ENCODE measurements at regions of chr1 and their contacts with region 1.

Region 1: GRCh38 chr1:109984456-109985275 is at the start of gene AHCYL1:
- DNase-seq: peak; percentile 99 to 100 (median 100)
- H3K4me3 ChIP-seq: peak within 1 kb of the TSS; percentile 71
- H3K27ac ChIP-seq: peak within 1 kb of the TSS; percentile 92 to 95
- H3K4me1 ChIP-seq: peaks cover 11% of the 10 kb centered on the region
- H3K27me3 ChIP-seq: no peaks in the 10 kb centered on the region
- CTCF ChIP-seq: peak; percentile 96 to 99 (median 99)
- EP300 ChIP-seq: peak; percentile 85
- POLR2A ChIP-seq: peak; percentile 99
- total RNA-seq, gene AHCYL1: 41.1 to 113 (median 85.8) TPM

Region 2: GRCh38 chr1:109539676-109540075 is 445.0 kb before region 1 on chr1 and contains the start of gene GPR61:
- intact Hi-C with region 1: loop called in 2 of 4 experiments (anchors 5 to 10 kb)
- DNase-seq: no peak
- H3K4me3 ChIP-seq: no peak within 1 kb of the TSS
- H3K27ac ChIP-seq: no peak within 1 kb of the TSS
- H3K4me1 ChIP-seq: peaks cover 4% of the 10 kb centered on the region
- H3K27me3 ChIP-seq: no peaks in the 10 kb centered on the region
- CTCF ChIP-seq: no peak
- EP300 ChIP-seq: no peak
- POLR2A ChIP-seq: no peak
- total RNA-seq, gene GPR61: not detected

Region 3: GRCh38 chr1:109556563-109556962 is 428.1 kb before region 1 on chr1:
- intact Hi-C with region 1: loop called in 1 of 4 experiments (anchors 10 kb)
- DNase-seq: no peak
- H3K4me3 ChIP-seq: no peak overlapping the region
- H3K27ac ChIP-seq: no peak overlapping the region
- H3K4me1 ChIP-seq: peaks cover 3% of the 10 kb centered on the region
- H3K27me3 ChIP-seq: no peaks in the 10 kb centered on the region
- CTCF ChIP-seq: no peak
- EP300 ChIP-seq: no peak
- POLR2A ChIP-seq: no peak

Region 4: GRCh38 chr1:109643385-109644230 is 341.1 kb before region 1 on chr1:
- intact Hi-C with region 1: loop called (anchors 5 to 10 kb)
- DNase-seq: peak; percentile 75 to 92 (median 88)
- H3K4me3 ChIP-seq: no peak overlapping the region
- H3K27ac ChIP-seq: peak overlapping the region in 1 of 2 donors; percentile 35
- H3K4me1 ChIP-seq: no peaks in the 10 kb centered on the region
- H3K27me3 ChIP-seq: no peaks in the 10 kb centered on the region
- CTCF ChIP-seq: peak; percentile 63 to 87 (median 71)
- EP300 ChIP-seq: no peak
- POLR2A ChIP-seq: no peak

Region 5: GRCh38 chr1:109773146-109773899 is 211.3 kb before region 1 on chr1:
- intact Hi-C with region 1: loop called (anchors 2 kb)
- DNase-seq: peak; percentile 79 to 88 (median 84)
- H3K4me3 ChIP-seq: no peak overlapping the region
- H3K27ac ChIP-seq: no peak overlapping the region
- H3K4me1 ChIP-seq: no peaks in the 10 kb centered on the region
- H3K27me3 ChIP-seq: no peaks in the 10 kb centered on the region
- CTCF ChIP-seq: peak; percentile 71 to 90 (median 88)
- EP300 ChIP-seq: no peak
- POLR2A ChIP-seq: no peak

Region 6: GRCh38 chr1:109923131-109923945 is 61.3 kb before region 1 on chr1:
- intact Hi-C with region 1: loop called in 2 of 4 experiments (anchors 5 to 10 kb)
- DNase-seq: peak in 2 of 5 donors; percentile 26 to 31
- H3K4me3 ChIP-seq: no peak overlapping the region
- H3K27ac ChIP-seq: no peak overlapping the region
- H3K4me1 ChIP-seq: peaks cover 7% of the 10 kb centered on the region
- H3K27me3 ChIP-seq: no peaks in the 10 kb centered on the region
- CTCF ChIP-seq: peak in 1 of 3 donors; percentile 18
- EP300 ChIP-seq: no peak
- POLR2A ChIP-seq: no peak

Measured in ovary (tissue), 10 donors.